WTC11 (cell line): ENCODE measurements at regions of chr17 and their contacts with region 1.

Region 1: DNA sequence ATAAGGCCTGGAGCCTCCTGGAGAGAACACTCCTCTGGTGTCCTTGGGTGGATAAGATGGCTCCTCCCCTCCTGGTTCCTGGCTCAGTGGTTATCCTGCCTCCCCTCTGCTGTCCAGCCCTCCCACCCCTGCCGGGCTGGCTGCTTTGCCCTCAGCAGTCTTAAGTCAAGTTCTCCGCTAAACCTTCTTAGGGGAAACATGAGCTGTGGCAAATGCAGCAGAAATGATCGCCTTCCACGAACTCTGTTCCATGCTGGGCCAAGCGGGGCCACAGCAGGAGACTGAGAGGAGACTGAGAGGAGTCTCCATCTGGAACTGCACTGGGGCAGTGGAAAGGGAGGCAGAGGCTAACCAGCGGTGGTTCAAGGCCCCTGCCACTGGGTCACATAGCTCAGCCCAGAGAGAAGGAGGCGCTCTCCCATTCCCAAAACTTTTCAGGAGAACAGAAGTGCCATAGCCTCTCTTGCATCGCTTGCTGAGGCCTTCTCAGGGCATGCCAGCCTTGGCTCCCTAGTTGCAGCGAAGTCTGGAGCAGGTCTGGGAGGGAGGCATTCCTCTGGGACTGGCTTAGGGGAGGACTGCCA is 26.9 kb downstream of the TNS4 start:
- DNase-seq: no peak
- ATAC-seq: no peak
- H3K4me3 Mint-ChIP-seq: no peak overlapping the region
- H3K27ac Mint-ChIP-seq: no peak overlapping the region
- H3K4me1 Mint-ChIP-seq: peaks cover 32% of the 10 kb centered on the region
- H3K27me3 Mint-ChIP-seq: peaks cover 6% of the 10 kb centered on the region
- CTCF ChIP-seq: no peak

Region 2: DNA sequence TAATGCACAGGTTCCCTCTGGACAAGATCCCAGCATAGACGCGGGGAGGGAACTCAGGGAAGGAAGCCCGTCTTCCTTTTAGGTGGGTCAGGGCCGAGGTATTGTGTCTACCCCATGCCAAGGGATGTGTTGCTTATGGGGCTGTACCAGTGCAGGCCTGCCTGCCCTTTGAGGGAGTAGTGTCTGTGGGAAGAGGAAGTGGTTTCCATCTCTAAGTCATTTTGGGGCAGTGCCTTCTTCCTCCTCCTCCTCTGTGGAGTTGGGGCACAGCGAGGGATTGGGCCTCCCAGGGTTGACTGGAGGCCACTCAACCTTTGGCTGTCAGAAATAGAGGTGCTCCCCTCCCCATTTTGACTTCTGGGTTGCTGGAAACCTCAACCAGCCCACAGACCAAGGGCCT is 136.5 kb before region 1 on chr17:
- CTCF ChIA-PET with region 1: no interaction called
- POLR2A ChIA-PET with region 1: no interaction called
- DNase-seq: no peak
- ATAC-seq: no peak
- H3K4me3 Mint-ChIP-seq: no peak overlapping the region
- H3K27ac Mint-ChIP-seq: no peak overlapping the region
- H3K4me1 Mint-ChIP-seq: peaks cover 8% of the 10 kb centered on the region
- H3K27me3 Mint-ChIP-seq: peaks cover 54% of the 10 kb centered on the region
- CTCF ChIP-seq: no peak

Region 3: GRCh38 chr17:40362696-40363110 is 111.8 kb before region 1 on chr17:
- CTCF ChIA-PET with region 1: interaction called, 34 read pairs
- POLR2A ChIA-PET with region 1: no interaction called
- DNase-seq: peak; percentile 92
- ATAC-seq: peak; percentile 66
- H3K4me3 Mint-ChIP-seq: peak overlapping the region; percentile 58
- H3K27ac Mint-ChIP-seq: no peak overlapping the region
- H3K4me1 Mint-ChIP-seq: peaks cover 36% of the 10 kb centered on the region
- H3K27me3 Mint-ChIP-seq: peaks cover 40% of the 10 kb centered on the region
- CTCF ChIP-seq: no peak

Region 4: DNA sequence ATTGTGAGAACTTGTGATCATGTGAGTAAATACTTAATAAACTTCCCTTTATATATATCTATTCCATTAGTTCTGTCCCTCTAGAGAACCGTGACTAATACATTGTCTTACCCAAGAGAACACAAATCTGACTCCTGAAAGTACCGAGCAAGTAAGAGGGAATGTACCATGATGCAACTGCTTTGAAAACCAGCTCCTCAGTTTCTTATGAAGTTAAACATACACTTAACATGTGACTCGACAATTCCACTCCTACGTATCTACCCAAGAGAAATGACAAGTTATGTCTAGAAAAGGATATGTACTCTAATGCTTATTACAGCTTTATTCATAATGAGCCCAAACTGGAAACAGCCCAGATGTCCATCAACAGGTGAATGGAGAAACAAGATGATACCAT is 101.2 kb before region 1 on chr17:
- CTCF ChIA-PET with region 1: no interaction called
- POLR2A ChIA-PET with region 1: no interaction called
- DNase-seq: no peak
- ATAC-seq: no peak
- H3K4me3 Mint-ChIP-seq: no peak overlapping the region
- H3K27ac Mint-ChIP-seq: no peak overlapping the region
- H3K4me1 Mint-ChIP-seq: peaks cover 8% of the 10 kb centered on the region
- H3K27me3 Mint-ChIP-seq: no peaks in the 10 kb centered on the region
- CTCF ChIP-seq: no peak

Region 5: GRCh38 chr17:40422990-40423616 is 51.4 kb before region 1 on chr17:
- CTCF ChIA-PET with region 1: interaction called, 125 read pairs
- POLR2A ChIA-PET with region 1: no interaction called
- DNase-seq: peak; percentile 67
- ATAC-seq: peak; percentile 80
- H3K4me3 Mint-ChIP-seq: peak overlapping the region; percentile 51
- H3K27ac Mint-ChIP-seq: peak overlapping the region; percentile 91
- H3K4me1 Mint-ChIP-seq: peaks cover 49% of the 10 kb centered on the region
- H3K27me3 Mint-ChIP-seq: no peaks in the 10 kb centered on the region; the same call in 1 of the 2 replicates
- CTCF ChIP-seq: no peak

Region 6: DNA sequence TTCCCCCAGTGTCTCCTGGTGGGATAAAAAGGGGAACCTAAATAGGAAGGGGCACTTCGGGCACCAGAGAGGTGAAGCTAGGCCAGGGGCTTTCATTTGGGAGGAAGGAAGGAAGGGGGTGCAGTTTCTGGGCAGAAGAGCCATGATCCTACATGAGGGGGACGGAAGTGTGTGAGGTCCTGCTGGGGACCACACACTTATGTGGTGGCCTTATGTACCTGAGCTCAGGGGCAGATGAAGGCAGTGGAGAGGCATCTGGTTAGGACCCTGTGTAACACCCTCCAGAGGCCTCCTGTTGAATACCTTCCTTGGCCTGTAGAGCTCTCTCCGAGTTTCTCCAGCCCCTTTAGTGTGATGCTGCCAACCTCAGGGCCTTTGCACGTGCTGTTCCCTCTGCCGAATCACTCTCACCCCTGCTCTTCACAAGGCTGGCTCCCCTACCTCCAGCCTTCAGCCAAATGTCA is 10.1 kb before region 1 on chr17:
- CTCF ChIA-PET with region 1: interaction called, 35 read pairs
- POLR2A ChIA-PET with region 1: interaction called, 3 read pairs
- DNase-seq: no peak
- ATAC-seq: peak; percentile 8
- H3K4me3 Mint-ChIP-seq: no peak overlapping the region
- H3K27ac Mint-ChIP-seq: peak overlapping the region; percentile 57
- H3K4me1 Mint-ChIP-seq: peaks cover 59% of the 10 kb centered on the region
- H3K27me3 Mint-ChIP-seq: peaks cover 3% of the 10 kb centered on the region
- CTCF ChIP-seq: no peak

Region 7: GRCh38 chr17:40499551-40500174 is 25.2 kb after region 1 on chr17:
- CTCF ChIA-PET with region 1: interaction called, 74 read pairs
- POLR2A ChIA-PET with region 1: interaction called, 5 read pairs
- DNase-seq: peak; percentile 87
- ATAC-seq: peak; percentile 91
- H3K4me3 Mint-ChIP-seq: peak overlapping the region; percentile 54
- H3K27ac Mint-ChIP-seq: peak overlapping the region; percentile 95
- H3K4me1 Mint-ChIP-seq: peaks cover 43% of the 10 kb centered on the region
- H3K27me3 Mint-ChIP-seq: no peaks in the 10 kb centered on the region; the same call in 1 of the 2 replicates
- CTCF ChIP-seq: no peak

Region 8: GRCh38 chr17:40536295-40537171 is 62.0 kb after region 1 on chr17:
- CTCF ChIA-PET with region 1: interaction called, 117 read pairs
- POLR2A ChIA-PET with region 1: interaction called, 12 read pairs
- DNase-seq: no peak
- ATAC-seq: no peak
- H3K4me3 Mint-ChIP-seq: no peak overlapping the region
- H3K27ac Mint-ChIP-seq: no peak overlapping the region
- H3K4me1 Mint-ChIP-seq: peaks cover 14% of the 10 kb centered on the region
- H3K27me3 Mint-ChIP-seq: no peaks in the 10 kb centered on the region; the same call in 1 of the 2 replicates
- CTCF ChIP-seq: no peak